ENCODE measurements at regions of chr11 and their contacts with region 1.

Region 1: DNA sequence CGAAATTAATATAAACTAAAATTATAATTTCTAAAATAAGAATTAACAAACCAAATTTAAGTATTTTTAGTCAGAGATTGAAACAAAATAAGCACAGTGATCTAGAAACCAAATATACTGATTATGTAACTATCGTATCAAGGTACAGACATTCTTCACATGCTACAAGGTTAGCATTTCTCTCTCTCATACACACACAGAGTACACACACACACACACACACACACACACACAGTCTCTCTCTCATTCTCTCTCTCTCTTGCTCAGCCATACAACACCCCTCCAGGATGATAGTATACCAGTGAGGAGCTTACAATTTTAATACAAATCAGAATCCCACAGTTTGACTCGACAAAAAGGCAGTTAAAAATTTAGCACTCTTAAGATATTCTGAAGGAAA is 66.0 kb downstream of the RDX start:
- DNase-seq: no peak
- ATAC-seq: no peak
- H3K4me3 ChIP-seq: no peak overlapping the region
- H3K27ac ChIP-seq: no peak overlapping the region
- H3K4me1 ChIP-seq: no peaks in the 10 kb centered on the region
- H3K27me3 ChIP-seq: no peaks in the 10 kb centered on the region
- CTCF ChIP-seq: no peak
- EP300 ChIP-seq: no peak
- POLR2A ChIP-seq: no peak
- RAD21 ChIP-seq: no peak

Region 2: GRCh38 chr11:109885006-109885405 is 345.4 kb before region 1 on chr11:
- CTCF ChIA-PET with region 1: no interaction called
- POLR2A ChIA-PET with region 1: no interaction called
- RAD21 ChIA-PET with region 1: no interaction called
- SMC1A ChIA-PET with region 1: no interaction called
- in situ Hi-C with region 1: no loop called
- intact Hi-C with region 1: no loop called
- DNase-seq: no peak
- ATAC-seq: no peak
- H3K4me3 ChIP-seq: no peak overlapping the region
- H3K27ac ChIP-seq: no peak overlapping the region
- H3K4me1 ChIP-seq: no peaks in the 10 kb centered on the region
- H3K27me3 ChIP-seq: peaks cover 0 to 2% of the 10 kb centered on the region in 2 experiments; a peak in 1 of 4 replicates
- CTCF ChIP-seq: no peak
- EP300 ChIP-seq: no peak
- POLR2A ChIP-seq: no peak
- RAD21 ChIP-seq: no peak

Region 3: GRCh38 chr11:110185121-110185591 is 45.2 kb before region 1 on chr11:
- CTCF ChIA-PET with region 1: no interaction called
- POLR2A ChIA-PET with region 1: no interaction called
- RAD21 ChIA-PET with region 1: no interaction called
- SMC1A ChIA-PET with region 1: no interaction called
- in situ Hi-C with region 1: no loop called
- intact Hi-C with region 1: no loop called
- DNase-seq: no peak
- ATAC-seq: no peak
- H3K4me3 ChIP-seq: no peak overlapping the region
- H3K27ac ChIP-seq: no peak overlapping the region
- H3K4me1 ChIP-seq: 0 out of 2 replicates have a peak, but pooled peaks cover 3% of the 10 kb centered on the region
- H3K27me3 ChIP-seq: peaks cover 0 to 3% of the 10 kb centered on the region in 2 experiments; a peak in 2 of 4 replicates
- CTCF ChIP-seq: no peak
- EP300 ChIP-seq: no peak
- POLR2A ChIP-seq: no peak
- RAD21 ChIP-seq: no peak

Region 4: DNA sequence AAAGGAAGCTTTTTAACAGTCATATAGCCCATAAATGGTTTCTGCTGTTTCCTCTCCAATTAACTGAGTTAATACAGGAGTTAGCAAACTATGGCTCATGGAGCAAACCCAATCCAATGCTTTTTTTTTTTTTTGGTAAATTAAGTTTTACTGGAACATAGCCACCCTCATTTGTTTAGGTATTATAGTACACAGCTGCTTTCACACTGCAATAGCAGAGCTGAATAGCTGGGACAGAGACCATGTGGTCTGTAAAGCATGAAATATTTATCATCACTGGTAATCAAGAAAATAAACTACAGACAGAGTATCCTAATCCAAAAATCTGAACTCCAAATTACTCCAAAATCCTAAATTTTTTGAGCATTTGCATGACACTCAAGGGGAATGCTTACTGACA is 12.4 kb after region 1 on chr11:
- CTCF ChIA-PET with region 1: interaction called, 3 read pairs
- POLR2A ChIA-PET with region 1: no interaction called
- RAD21 ChIA-PET with region 1: no interaction called
- SMC1A ChIA-PET with region 1: interaction called, 10 read pairs
- in situ Hi-C with region 1: no loop called
- intact Hi-C with region 1: no loop called
- DNase-seq: no peak
- ATAC-seq: no peak
- H3K4me3 ChIP-seq: no peak overlapping the region
- H3K27ac ChIP-seq: no peak overlapping the region
- H3K4me1 ChIP-seq: no peaks in the 10 kb centered on the region
- H3K27me3 ChIP-seq: no peaks in the 10 kb centered on the region
- CTCF ChIP-seq: no peak
- EP300 ChIP-seq: no peak
- POLR2A ChIP-seq: no peak
- RAD21 ChIP-seq: no peak

Region 5: GRCh38 chr11:110337570-110338193 is 107.3 kb after region 1 on chr11:
- CTCF ChIA-PET with region 1: no interaction called
- POLR2A ChIA-PET with region 1: no interaction called
- RAD21 ChIA-PET with region 1: no interaction called
- SMC1A ChIA-PET with region 1: no interaction called
- in situ Hi-C with region 1: no loop called
- intact Hi-C with region 1: no loop called
- DNase-seq: no peak
- ATAC-seq: peak; percentile 64
- H3K4me3 ChIP-seq: no peak overlapping the region
- H3K27ac ChIP-seq: peak overlapping the region; percentile 24; the same call in 1 of the 2 replicates
- H3K4me1 ChIP-seq: peaks cover 7% of the 10 kb centered on the region; the same call in 1 of the 2 replicates
- H3K27me3 ChIP-seq: no peaks in the 10 kb centered on the region
- CTCF ChIP-seq: no peak
- EP300 ChIP-seq: no peak
- POLR2A ChIP-seq: no peak
- RAD21 ChIP-seq: no peak

Region 6: DNA sequence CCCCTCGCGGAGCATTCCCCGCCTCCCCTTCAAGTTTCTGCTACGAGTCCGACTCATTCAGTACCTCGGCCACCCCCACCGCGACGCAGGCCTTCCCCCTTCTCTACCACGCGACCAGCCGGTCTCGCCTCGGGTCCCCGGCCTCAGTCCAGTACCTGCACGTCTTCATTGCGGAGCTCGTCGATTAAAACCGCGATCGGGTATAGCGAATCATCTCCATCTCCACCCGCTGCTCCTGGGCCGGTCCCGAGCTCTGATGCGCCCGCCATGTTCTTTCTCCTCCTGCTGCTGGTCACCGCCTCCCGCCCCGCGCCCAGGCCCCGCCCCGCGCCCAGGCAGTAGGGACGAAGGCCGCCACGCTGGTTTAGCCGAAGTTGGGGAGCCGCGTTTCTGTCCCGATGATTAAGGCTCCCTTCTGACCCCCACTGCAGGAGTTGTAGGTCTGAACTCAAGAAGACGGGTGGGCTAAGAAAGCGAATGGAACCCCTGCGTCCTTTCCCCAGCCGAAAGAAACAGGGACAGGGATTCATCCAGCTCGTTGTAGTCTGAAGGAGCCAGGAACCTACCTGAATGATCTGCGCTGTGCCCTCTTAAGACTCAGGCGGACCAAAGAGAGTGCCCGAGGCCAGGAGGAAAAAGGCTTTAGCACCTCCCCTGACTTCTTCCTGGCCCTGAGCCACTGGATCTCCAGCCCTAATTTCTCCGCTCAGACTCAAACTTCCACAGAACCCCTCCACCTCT is 1535.9 kb after region 1 on chr11 and contains the start of gene PPP2R1B:
- CTCF ChIA-PET with region 1: no interaction called
- POLR2A ChIA-PET with region 1: no interaction called
- RAD21 ChIA-PET with region 1: no interaction called
- SMC1A ChIA-PET with region 1: no interaction called
- in situ Hi-C with region 1: no loop called
- intact Hi-C with region 1: no loop called
- DNase-seq: peak; percentile 35
- ATAC-seq: peak; percentile 97
- H3K4me3 ChIP-seq: peak within 1 kb of the TSS; percentile 78
- H3K27ac ChIP-seq: peak within 1 kb of the TSS; percentile 77
- H3K4me1 ChIP-seq: no peaks in the 10 kb centered on the region; the same call in 1 of the 2 replicates
- H3K27me3 ChIP-seq: no peaks in the 10 kb centered on the region
- CTCF ChIP-seq: no peak
- EP300 ChIP-seq: no peak
- POLR2A ChIP-seq: peak; percentile 89
- RAD21 ChIP-seq: no peak
- polyA plus RNA-seq, gene PPP2R1B: 28.5 to 37.0 TPM